Activated naive CD4-positive, alpha-beta T cell treated with anti-CD3 and anti-CD28 coated beads for 36 hours (primary cell): ENCODE measurements at regions of chr7 and their contacts with region 1.

Region 1: GRCh38 chr7:134432296-134433152 is 26.4 kb downstream of the AKR1B1 start:
- DNase-seq: peak; percentile 82
- H3K4me3 Mint-ChIP-seq: peak overlapping the region; percentile 72
- H3K27ac Mint-ChIP-seq: peak overlapping the region; percentile 79
- H3K4me1 Mint-ChIP-seq: peaks cover 7% of the 10 kb centered on the region
- H3K27me3 Mint-ChIP-seq: no peaks in the 10 kb centered on the region

Region 2: DNA sequence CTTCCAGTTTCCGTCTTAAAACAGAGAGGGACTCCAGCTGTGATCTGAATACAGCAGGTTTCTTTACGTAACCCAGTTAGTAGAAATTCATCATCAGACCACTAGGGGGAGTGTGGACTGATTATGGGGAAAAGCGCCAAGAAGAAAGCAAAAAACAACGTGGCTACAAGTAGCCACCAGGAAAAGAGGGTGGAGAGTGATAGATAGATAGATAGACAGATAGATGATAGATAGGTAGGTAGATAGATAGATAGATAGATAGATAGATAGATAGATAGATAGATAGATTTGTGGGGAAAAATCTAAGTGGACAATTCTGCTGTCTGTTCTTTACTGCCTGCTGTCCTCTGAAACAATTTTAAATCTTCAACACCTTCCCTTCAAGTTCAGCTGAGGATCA is 82.1 kb after region 1 on chr7:
- CTCF ChIA-PET with region 1: interaction called, 69 read pairs
- intact Hi-C with region 1: loop called (anchors 1 kb)
- DNase-seq: peak; percentile 22
- H3K4me3 Mint-ChIP-seq: no peak overlapping the region
- H3K27ac Mint-ChIP-seq: no peak overlapping the region
- H3K4me1 Mint-ChIP-seq: peaks cover 10% of the 10 kb centered on the region
- H3K27me3 Mint-ChIP-seq: peaks cover 10% of the 10 kb centered on the region

Region 3: DNA sequence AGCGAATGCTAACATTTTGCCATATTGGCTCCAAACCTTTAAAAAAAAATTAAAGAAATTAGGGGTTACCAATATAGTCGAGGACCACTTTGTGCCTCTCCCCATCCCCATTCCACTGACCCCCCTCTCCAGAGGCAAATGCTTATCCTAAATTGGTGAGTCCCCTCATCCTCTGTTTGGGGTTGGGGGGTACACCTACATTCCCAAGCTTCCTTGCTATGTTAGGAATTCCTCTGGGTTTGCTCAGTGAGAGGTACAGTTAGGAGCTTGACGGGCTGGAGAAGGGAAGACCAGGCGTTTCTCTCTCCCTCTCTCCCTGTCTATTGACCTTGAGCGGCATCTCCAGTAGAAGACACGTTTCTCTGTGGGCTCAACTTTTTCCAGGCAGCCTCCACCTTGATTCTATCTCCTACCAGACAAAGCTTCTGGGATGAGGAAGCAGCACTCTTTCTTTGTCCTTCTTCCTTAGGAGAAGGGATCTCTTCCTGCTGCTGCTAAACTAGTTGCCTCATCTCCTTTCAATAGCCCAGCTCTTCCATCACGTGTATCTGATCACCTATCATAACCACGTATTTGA is 109.8 kb after region 1 on chr7:
- CTCF ChIA-PET with region 1: interaction called, 37 read pairs
- intact Hi-C with region 1: loop called (anchors 1 kb)
- DNase-seq: no peak
- H3K4me3 Mint-ChIP-seq: no peak overlapping the region
- H3K27ac Mint-ChIP-seq: no peak overlapping the region
- H3K4me1 Mint-ChIP-seq: no peaks in the 10 kb centered on the region
- H3K27me3 Mint-ChIP-seq: peaks cover 9% of the 10 kb centered on the region

Region 4: GRCh38 chr7:134547397-134548054 is 115.0 kb after region 1 on chr7:
- CTCF ChIA-PET with region 1: interaction called, 37 read pairs
- intact Hi-C with region 1: loop called (anchors 1 kb)
- DNase-seq: peak; percentile 82
- H3K4me3 Mint-ChIP-seq: no peak overlapping the region
- H3K27ac Mint-ChIP-seq: no peak overlapping the region
- H3K4me1 Mint-ChIP-seq: peaks cover 3% of the 10 kb centered on the region
- H3K27me3 Mint-ChIP-seq: peaks cover 9% of the 10 kb centered on the region

Region 5: DNA sequence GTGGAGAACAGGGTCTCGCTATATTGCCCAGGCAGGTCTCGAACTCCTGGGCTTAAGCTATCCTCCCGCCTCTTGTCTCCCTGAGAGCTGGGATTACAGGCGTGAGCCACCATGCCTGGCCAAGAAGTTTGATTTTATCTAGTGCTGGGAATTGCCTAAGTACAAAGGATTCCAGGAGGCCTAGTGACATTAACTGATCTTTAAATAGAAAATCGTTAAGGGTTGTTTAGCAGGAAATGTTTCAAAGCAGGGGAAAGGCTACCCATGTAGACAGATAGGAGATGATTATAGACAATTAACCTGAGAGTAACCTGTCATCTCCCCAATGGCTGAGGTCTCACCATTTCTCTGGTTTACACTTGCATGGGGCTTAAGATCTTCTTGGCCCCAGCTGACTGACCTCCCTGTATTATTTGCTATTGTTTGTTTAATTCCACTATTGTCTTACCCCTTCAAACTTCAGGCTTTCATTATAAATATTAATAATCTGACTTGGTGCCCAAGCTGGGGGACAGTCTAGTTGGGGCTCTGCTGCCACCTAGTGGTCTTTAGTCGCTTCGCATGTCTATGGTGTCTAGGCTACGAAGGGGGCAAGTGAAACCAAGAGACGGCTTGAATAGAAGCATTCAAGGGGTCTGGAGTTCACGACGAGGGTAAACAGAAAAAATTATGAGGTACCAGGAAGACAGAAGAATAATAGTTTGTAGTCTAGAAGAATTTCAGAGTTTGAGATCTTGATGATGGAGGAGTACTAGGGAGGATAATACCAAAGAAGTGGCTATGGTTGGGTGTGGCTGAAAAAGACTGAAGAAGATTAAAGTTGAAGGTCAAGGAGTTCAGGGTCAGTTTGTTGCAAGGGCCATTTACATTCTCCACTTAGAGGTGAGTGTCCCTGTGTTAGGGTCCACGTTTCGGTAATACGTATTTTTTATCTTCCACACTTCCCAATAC is 173.7 kb after region 1 on chr7:
- CTCF ChIA-PET with region 1: interaction called, 46 read pairs
- intact Hi-C with region 1: loop called (anchors 1 kb)
- DNase-seq: peak; percentile 76
- H3K4me3 Mint-ChIP-seq: no peak overlapping the region
- H3K27ac Mint-ChIP-seq: no peak overlapping the region
- H3K4me1 Mint-ChIP-seq: peaks cover 1% of the 10 kb centered on the region
- H3K27me3 Mint-ChIP-seq: peaks cover 3% of the 10 kb centered on the region

Region 6: GRCh38 chr7:134755401-134756022 is 323.0 kb after region 1 on chr7:
- CTCF ChIA-PET with region 1: no interaction called
- intact Hi-C with region 1: loop called (anchors 5 kb)
- DNase-seq: peak; percentile 75
- H3K4me3 Mint-ChIP-seq: no peak overlapping the region
- H3K27ac Mint-ChIP-seq: no peak overlapping the region
- H3K4me1 Mint-ChIP-seq: no peaks in the 10 kb centered on the region
- H3K27me3 Mint-ChIP-seq: no peaks in the 10 kb centered on the region

Region 7: GRCh38 chr7:134954197-134955082 is 521.9 kb after region 1 on chr7:
- CTCF ChIA-PET with region 1: no interaction called
- intact Hi-C with region 1: loop called (anchors 5 kb)
- DNase-seq: no peak
- H3K4me3 Mint-ChIP-seq: no peak overlapping the region
- H3K27ac Mint-ChIP-seq: no peak overlapping the region
- H3K4me1 Mint-ChIP-seq: no peaks in the 10 kb centered on the region
- H3K27me3 Mint-ChIP-seq: no peaks in the 10 kb centered on the region